ENCODE measurements at regions of chr19 and their contacts with region 1.

Region 1: GRCh38 chr19:53431399-53432087 is at the start of gene ZNF761:
- DNase-seq: peak; percentile 98
- H3K4me3 ChIP-seq: peak within 1 kb of the TSS; percentile 47 to 71 (median 57)
- H3K27ac ChIP-seq: peak within 1 kb of the TSS; percentile 81 to 89 (median 84)
- H3K4me1 ChIP-seq: peaks cover 6 to 11% (median 7%) of the 10 kb centered on the region in 4 donors
- H3K27me3 ChIP-seq: no peaks in the 10 kb centered on the region
- CTCF ChIP-seq: peak; percentile 30 to 54 (median 40)
- EP300 ChIP-seq: no peak
- POLR2A ChIP-seq: peak; percentile 86
- total RNA-seq, gene ZNF761: 3.0 to 15.1 (median 10.2) TPM

Region 2: DNA sequence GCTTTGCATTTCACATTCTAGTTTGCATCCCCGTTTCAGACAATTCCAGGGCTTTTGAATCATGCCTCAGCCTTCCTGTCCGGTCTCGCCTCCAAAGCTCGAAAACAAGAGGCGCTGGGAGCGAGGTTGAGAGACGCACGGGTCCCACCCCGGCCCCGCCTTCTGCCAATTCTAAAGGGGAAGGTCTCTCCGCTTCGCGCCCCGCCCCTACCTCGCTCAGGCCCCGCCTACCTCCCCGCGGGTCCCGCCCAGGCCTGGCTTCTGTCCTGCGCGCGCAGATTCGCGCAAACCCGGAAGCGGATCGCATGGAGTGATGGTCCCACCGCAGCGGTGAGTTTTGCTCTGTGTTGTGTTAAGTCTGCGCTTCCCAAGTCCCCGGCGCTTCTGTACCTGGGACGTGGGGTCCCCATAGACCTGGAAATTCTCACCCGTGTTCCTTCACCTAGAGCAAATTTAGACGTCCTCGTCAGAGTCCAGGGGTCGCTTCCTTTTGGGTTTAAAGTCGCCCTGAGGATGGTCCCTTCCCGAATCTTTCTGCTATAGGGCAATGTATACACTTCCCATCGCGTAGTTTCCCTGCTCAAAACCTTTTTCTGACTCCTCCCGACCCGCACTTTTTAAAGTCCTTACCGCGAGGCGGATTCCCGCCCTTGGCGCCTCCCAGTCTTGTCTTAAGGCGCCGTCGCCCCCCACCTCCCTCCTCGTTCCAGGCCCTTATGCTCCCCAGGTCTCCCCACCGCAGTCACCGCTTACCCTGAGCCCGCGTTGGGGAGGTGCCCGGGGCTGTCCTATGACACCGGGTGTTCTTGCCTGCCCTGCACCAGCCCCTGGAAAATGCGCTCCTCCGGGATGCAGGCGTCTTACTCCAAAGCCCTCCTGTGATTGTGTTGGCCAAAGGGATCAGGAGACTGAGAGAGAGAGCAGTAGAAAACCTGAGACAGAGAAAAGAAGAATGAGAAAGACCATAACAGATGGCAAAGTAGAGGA is 97.8 kb before region 1 on chr19 and contains the start of gene ZNF845:
- in situ Hi-C with region 1: no loop called
- intact Hi-C with region 1: no loop called
- DNase-seq: peak; percentile 98
- H3K4me3 ChIP-seq: peak within 1 kb of the TSS; percentile 76 to 97 (median 90)
- H3K27ac ChIP-seq: peak within 1 kb of the TSS; percentile 75 to 89 (median 86)
- H3K4me1 ChIP-seq: peaks cover 0 to 15% (median 7%) of the 10 kb centered on the region in 4 donors
- H3K27me3 ChIP-seq: no peaks in the 10 kb centered on the region
- CTCF ChIP-seq: no peak
- EP300 ChIP-seq: no peak
- POLR2A ChIP-seq: peak; percentile 68
- total RNA-seq, gene ZNF845: 1.6 to 8.4 (median 5.9) TPM

Region 3: GRCh38 chr19:53471916-53472315 is 40.4 kb after region 1 on chr19:
- in situ Hi-C with region 1: loop called in 1 of 4 experiments (anchors 5 kb)
- intact Hi-C with region 1: no loop called
- DNase-seq: no peak
- H3K4me3 ChIP-seq: no peak overlapping the region
- H3K27ac ChIP-seq: no peak overlapping the region
- H3K4me1 ChIP-seq: peaks cover 6 to 12% (median 10%) of the 10 kb centered on the region in 4 donors
- H3K27me3 ChIP-seq: no peaks in the 10 kb centered on the region
- CTCF ChIP-seq: no peak
- EP300 ChIP-seq: no peak
- POLR2A ChIP-seq: no peak

Region 4: GRCh38 chr19:53730390-53730789 is 298.8 kb after region 1 on chr19:
- in situ Hi-C with region 1: loop called in 1 of 4 experiments (anchors 25 kb)
- intact Hi-C with region 1: no loop called
- DNase-seq: no peak
- H3K4me3 ChIP-seq: no peak overlapping the region
- H3K27ac ChIP-seq: no peak overlapping the region
- H3K4me1 ChIP-seq: no peaks in the 10 kb centered on the region
- H3K27me3 ChIP-seq: no peaks in the 10 kb centered on the region
- CTCF ChIP-seq: no peak
- EP300 ChIP-seq: no peak
- POLR2A ChIP-seq: no peak